ENCODE measurements at regions of chr5 and their contacts with region 1.

Region 1: DNA sequence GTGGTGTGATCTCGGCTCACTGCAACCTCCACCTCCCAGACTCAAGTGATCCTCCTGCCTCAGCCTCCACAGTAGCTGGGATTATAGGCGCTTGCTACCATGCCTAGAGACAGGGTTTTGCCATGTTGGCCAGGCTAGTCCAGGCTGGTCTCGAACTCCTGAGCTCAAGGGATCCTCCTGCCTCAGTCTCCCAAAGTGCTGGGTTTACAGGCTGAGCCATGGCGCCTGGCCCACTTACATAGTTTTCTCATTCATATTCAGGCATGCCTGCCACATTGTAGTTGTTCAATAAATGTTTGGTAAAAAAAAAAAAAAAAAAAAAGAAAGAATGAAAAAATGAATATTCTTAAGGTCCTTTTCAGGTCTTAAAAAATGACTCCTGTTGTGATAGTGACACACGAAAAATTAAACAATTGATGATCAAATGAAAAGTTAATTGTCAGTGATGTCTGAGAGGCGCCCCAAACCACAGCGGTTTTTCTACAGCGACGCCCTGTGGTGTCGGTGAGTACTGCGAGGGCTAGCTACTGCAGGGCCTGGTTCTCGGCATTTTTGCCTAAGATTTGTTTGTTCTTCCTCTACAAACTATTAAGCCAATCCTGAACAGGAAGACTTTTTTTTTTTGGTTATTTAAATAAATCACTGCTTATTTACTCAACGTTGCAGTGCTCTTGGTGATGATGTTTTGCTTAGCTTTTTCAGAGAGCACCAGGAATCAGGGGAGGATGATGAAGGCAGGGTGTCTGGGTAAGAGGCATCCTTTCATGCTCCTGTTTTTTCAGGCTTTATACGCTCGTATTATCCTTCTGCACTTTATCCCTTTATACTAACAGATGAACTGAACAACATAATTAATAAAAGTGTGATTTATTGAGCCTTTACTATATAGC is 67.0 kb upstream of the DPYSL3 start:
- DNase-seq: peak; percentile 68
- H3K4me3 Mint-ChIP-seq: no peak overlapping the region
- H3K27ac Mint-ChIP-seq: no peak overlapping the region
- H3K4me1 Mint-ChIP-seq: no peaks in the 10 kb centered on the region
- H3K27me3 Mint-ChIP-seq: no peaks in the 10 kb centered on the region
- CTCF ChIP-seq: peak; percentile 99

Region 2: DNA sequence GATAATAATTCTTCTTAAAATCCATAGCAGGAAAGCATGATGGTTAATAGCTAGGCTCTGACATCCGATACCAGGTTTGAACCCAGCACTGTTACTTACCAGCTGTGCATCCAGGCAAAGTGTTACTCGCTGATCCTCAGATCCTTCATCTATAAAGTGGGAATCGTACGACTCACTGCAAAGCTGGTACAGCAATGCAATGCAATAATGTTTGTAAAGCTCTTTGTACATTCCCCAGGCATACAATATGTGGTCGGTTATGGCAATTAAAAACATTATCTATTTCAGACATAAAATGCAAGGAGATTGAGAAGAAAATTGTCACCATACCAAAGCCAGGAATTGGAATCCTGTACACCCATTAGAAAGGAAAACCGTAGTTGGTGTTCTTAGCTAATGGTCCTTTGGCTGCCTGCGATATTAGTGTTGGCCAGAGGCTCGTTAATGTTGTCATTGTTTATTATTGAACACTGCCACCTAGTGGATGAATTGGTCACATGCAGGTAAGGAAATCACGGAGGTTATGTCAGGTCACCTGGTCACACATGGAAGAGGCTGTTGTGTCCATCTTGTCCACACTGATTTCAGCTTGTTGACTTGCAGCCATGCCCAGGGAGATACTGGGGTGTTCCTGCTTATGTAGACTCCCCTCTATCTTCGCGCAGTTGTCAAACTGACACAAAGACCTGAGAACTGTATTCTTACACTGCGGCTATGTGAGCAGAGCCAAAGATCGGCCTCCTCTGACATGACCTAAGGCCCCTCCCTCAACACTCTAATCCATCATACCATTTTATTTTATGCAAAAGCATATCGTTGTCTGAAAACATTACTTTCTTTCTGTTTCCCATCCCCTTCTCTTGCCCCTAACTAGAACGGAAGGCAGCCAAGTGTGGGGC is 610.9 kb before region 1 on chr5:
- CTCF ChIA-PET with region 1: interaction called, 3 read pairs
- POLR2A ChIA-PET with region 1: no interaction called
- intact Hi-C with region 1: loop called (anchors 10 kb)
- DNase-seq: peak; percentile 89
- H3K4me3 Mint-ChIP-seq: no peak overlapping the region
- H3K27ac Mint-ChIP-seq: no peak overlapping the region
- H3K4me1 Mint-ChIP-seq: peaks cover 11% of the 10 kb centered on the region
- H3K27me3 Mint-ChIP-seq: peaks cover 24% of the 10 kb centered on the region
- CTCF ChIP-seq: peak; percentile 89

Region 3: GRCh38 chr5:147391781-147392180 is 185.1 kb before region 1 on chr5:
- CTCF ChIA-PET with region 1: interaction called, 78 read pairs
- POLR2A ChIA-PET with region 1: interaction called, 3 read pairs
- intact Hi-C with region 1: loop called (anchors 2 kb)
- DNase-seq: peak; percentile 89
- H3K4me3 Mint-ChIP-seq: no peak overlapping the region
- H3K27ac Mint-ChIP-seq: no peak overlapping the region
- H3K4me1 Mint-ChIP-seq: no peaks in the 10 kb centered on the region
- H3K27me3 Mint-ChIP-seq: no peaks in the 10 kb centered on the region
- CTCF ChIP-seq: peak; percentile 87

Region 4: DNA sequence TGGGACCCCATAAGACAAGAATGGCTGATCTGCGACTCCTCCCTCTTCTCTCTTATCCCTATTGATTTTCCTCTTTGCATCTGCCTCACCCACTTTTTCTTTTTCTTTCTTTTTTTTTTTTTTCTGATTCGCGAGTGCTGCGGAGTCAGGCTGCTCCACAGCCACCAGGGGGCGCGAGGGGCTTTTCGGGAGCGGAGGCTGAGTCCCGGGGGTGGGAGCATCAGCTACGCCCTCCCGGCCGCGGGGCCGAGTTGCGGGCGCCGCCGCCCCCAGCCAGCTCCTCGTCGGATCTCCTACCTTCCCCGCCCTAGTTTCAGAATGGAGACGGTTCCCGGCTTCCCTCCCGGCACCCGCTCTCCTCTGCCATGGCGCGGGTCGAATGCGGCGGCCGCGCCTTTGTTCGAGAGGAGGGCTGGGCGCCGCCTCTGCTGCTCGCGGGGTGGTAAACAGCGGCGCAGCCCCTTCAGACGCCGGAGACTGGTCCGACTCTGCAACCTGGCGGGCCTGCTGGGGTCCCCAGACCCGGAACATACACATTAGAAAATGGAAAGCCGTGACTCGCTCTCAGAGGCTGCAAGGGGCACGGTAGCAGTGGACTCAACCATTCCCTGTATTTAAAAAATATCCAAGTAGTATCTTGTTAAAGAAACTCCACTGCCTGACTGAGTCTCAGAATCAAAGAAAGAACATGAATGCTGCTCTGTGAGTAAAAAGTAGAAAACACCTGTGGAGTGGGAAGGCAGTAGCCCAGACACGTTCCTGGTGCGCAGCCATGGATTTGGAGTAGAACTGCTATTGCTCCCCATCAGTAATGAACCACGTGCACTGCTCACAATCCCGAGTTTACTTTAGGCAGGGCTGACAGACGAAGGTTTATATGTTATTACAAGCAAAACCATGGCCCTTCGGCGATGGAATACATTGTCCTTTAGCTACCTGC is 122.7 kb before region 1 on chr5:
- CTCF ChIA-PET with region 1: interaction called, 210 read pairs
- POLR2A ChIA-PET with region 1: interaction called, 6 read pairs
- intact Hi-C with region 1: loop called (anchors 1 kb)
- DNase-seq: peak; percentile 86
- H3K4me3 Mint-ChIP-seq: peak overlapping the region; percentile 84
- H3K27ac Mint-ChIP-seq: peak overlapping the region; percentile 64
- H3K4me1 Mint-ChIP-seq: peaks cover 10% of the 10 kb centered on the region
- H3K27me3 Mint-ChIP-seq: peaks cover 33% of the 10 kb centered on the region
- CTCF ChIP-seq: peak; percentile 97

Region 5: GRCh38 chr5:147519380-147519779 is 57.5 kb before region 1 on chr5:
- CTCF ChIA-PET with region 1: interaction called, 18 read pairs
- POLR2A ChIA-PET with region 1: interaction called, 3 read pairs
- intact Hi-C with region 1: no loop called
- DNase-seq: no peak
- H3K4me3 Mint-ChIP-seq: no peak overlapping the region
- H3K27ac Mint-ChIP-seq: no peak overlapping the region
- H3K4me1 Mint-ChIP-seq: peaks cover 19% of the 10 kb centered on the region
- H3K27me3 Mint-ChIP-seq: peaks cover 45% of the 10 kb centered on the region
- CTCF ChIP-seq: no peak

Region 6: DNA sequence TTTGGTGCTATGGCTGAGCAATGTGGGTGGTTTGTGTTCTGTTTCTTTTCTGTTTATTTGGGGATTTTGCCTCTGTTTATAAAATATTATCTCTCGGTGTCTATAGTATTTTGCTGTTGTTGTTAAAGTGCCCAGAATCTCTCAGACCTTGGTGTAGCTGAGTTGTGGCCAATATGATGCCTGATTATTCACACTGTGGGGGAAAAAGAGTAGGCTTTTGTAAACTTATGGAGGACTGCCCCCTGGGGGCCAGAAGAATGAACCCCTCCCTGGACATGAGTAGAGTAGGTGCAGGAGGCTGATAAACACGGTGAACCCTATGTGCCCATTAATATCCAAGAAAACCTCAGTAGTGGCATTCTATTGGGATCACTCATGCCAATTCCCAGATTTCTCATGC is 18.1 kb before region 1 on chr5:
- CTCF ChIA-PET with region 1: interaction called, 156 read pairs
- POLR2A ChIA-PET with region 1: no interaction called
- intact Hi-C with region 1: no loop called
- DNase-seq: peak; percentile 74
- H3K4me3 Mint-ChIP-seq: no peak overlapping the region
- H3K27ac Mint-ChIP-seq: no peak overlapping the region
- H3K4me1 Mint-ChIP-seq: peaks cover 5% of the 10 kb centered on the region
- H3K27me3 Mint-ChIP-seq: no peaks in the 10 kb centered on the region
- CTCF ChIP-seq: peak; percentile 81

Region 7: GRCh38 chr5:147776989-147777388 is 200.1 kb after region 1 on chr5:
- CTCF ChIA-PET with region 1: no interaction called
- POLR2A ChIA-PET with region 1: no interaction called
- intact Hi-C with region 1: no loop called
- DNase-seq: no peak
- H3K4me3 Mint-ChIP-seq: no peak overlapping the region
- H3K27ac Mint-ChIP-seq: no peak overlapping the region
- H3K4me1 Mint-ChIP-seq: no peaks in the 10 kb centered on the region
- H3K27me3 Mint-ChIP-seq: peaks cover 66% of the 10 kb centered on the region
- CTCF ChIP-seq: no peak

Region 8: GRCh38 chr5:147822686-147823491 is 246.0 kb after region 1 on chr5:
- CTCF ChIA-PET with region 1: interaction called, 8 read pairs
- POLR2A ChIA-PET with region 1: no interaction called
- intact Hi-C with region 1: loop called (anchors 1 kb)
- DNase-seq: peak; percentile 77
- H3K4me3 Mint-ChIP-seq: no peak overlapping the region
- H3K27ac Mint-ChIP-seq: no peak overlapping the region
- H3K4me1 Mint-ChIP-seq: peaks cover 4% of the 10 kb centered on the region
- H3K27me3 Mint-ChIP-seq: peaks cover 33% of the 10 kb centered on the region
- CTCF ChIP-seq: peak; percentile 96